Activated CD4-positive, alpha-beta T cell treated with anti-CD3 and anti-CD28 coated beads for 36 hours (primary cell): ENCODE measurements at regions of chr15 and their contacts with region 1.

Region 1: DNA sequence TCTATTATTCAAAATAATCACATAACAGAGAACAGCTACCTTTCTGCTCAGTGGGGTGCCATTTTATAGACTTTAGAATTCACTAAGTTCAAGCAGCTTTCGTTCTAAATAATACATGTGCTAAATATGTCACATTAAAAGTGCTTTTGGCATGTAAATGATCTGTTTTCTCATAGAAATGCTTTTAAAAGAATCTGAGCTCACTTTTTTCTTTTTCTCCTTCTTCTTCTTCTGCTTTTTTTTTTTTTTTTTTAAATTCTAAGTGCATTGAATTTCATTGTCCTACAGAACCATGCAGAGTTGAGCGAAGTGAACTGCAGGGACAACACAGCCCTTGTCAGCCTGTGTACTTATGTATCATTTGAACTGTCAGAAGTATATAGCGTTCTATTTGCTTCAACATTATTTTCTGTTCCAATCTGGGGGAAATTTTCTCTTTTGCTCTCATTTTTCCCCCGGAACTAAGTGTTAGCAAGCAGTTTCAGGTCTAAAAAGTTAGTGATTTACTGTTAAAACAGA is 193.8 kb upstream of the TMCO5A start:
- DNase-seq: no peak
- ATAC-seq: no peak
- H3K4me3 Mint-ChIP-seq: no peak overlapping the region
- H3K27ac Mint-ChIP-seq: no peak overlapping the region
- H3K4me1 Mint-ChIP-seq: no peaks in the 10 kb centered on the region
- H3K27me3 Mint-ChIP-seq: peaks cover 2% of the 10 kb centered on the region

Region 2: DNA sequence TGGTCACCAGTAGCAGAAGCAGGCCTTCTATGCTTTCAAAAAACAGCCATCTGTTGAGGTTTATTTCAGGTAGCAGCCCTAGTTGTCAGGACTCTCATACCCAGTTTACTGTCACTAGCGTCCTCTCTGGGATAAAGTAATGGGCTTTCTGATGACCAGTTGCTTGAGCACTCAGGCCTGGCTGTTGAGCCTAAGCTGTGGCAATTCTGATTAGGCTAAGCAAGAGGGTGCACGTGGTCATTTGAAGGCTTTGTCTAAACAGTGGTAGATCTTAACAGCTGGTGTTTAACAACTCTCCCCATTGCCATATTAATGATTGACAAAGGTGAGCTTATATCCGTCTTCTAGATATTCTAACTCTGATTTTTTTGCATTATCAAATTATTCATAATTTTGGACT is 60.8 kb after region 1 on chr15:
- CTCF ChIA-PET with region 1: no interaction called
- POLR2A ChIA-PET with region 1: no interaction called
- intact Hi-C with region 1: loop called in 1 of 2 experiments (anchors 10 kb)
- DNase-seq: no peak
- ATAC-seq: no peak
- H3K4me3 Mint-ChIP-seq: no peak overlapping the region
- H3K27ac Mint-ChIP-seq: no peak overlapping the region
- H3K4me1 Mint-ChIP-seq: no peaks in the 10 kb centered on the region
- H3K27me3 Mint-ChIP-seq: peaks cover 2% of the 10 kb centered on the region